Vagina (tissue), 2 donors: ENCODE measurements at regions of chr13 and their contacts with region 1.

Region 1: GRCh38 chr13:95185851-95186250 is 115.4 kb downstream of the ABCC4 start:
- DNase-seq: no peak
- H3K4me3 ChIP-seq: no peak overlapping the region
- H3K27ac ChIP-seq: no peak overlapping the region
- H3K4me1 ChIP-seq: no peaks in the 10 kb centered on the region
- H3K27me3 ChIP-seq: no peaks in the 10 kb centered on the region
- CTCF ChIP-seq: no peak
- POLR2A ChIP-seq: no peak

Region 2: DNA sequence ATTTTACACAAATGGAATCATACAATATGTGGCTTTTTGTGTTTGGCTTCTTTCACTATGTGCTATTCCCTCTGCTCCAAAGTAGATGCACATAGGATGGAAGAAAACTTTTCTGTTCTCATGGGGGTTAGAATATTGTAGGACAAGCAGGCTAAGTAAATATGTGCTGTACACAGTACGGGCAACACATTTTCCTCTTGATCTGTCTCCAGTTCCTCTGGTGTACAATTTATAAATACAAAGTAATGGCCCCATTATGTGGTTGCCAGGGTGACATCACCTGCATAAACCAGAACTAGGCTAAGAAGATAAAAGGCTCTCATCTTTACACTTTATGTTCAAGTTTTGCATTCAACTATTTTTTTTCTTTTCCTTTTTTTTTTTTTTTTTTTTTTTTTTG is 432.5 kb before region 1 on chr13:
- intact Hi-C with region 1: no loop called
- DNase-seq: no peak
- H3K4me3 ChIP-seq: no peak overlapping the region
- H3K27ac ChIP-seq: no peak overlapping the region
- H3K4me1 ChIP-seq: no peaks in the 10 kb centered on the region
- H3K27me3 ChIP-seq: no peaks in the 10 kb centered on the region
- CTCF ChIP-seq: no peak
- POLR2A ChIP-seq: no peak

Region 3: GRCh38 chr13:95403828-95404522 is 218.1 kb after region 1 on chr13:
- intact Hi-C with region 1: loop called (anchors 5 kb)
- DNase-seq: no peak
- H3K4me3 ChIP-seq: peak overlapping the region; percentile 20 to 30
- H3K27ac ChIP-seq: no peak overlapping the region
- H3K4me1 ChIP-seq: peaks cover 6% of the 10 kb centered on the region
- H3K27me3 ChIP-seq: no peaks in the 10 kb centered on the region
- CTCF ChIP-seq: peak; percentile 72 to 94 (median 88)
- POLR2A ChIP-seq: no peak